ENCODE measurements at regions of chr12 and their contacts with region 1.

Region 1: DNA sequence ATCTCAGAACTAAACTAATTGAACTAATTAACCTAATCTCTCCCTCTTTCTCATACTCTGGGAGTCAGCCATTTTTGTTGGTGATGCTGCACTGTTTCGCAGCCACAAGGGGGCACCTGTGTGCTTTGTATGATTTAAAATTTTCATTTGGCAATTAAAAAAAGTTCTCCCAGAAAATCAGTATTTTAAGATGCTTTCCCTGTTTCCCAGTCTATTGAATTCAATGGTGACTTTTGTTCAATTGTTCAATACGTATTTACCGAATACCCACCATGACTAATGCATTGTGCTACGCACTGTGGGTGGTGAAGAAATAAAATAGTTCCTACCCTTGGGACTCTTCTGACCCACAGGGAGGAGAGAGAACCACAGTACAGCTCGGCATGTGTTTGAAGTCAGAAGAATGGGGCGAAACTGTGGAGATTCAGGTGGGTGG is 63.7 kb downstream of the ZNF664 start:
- DNase-seq: peak in 7 of 9 donors; percentile 14 to 57 (median 37)
- ATAC-seq: peak; percentile 72
- H3K4me3 ChIP-seq: no peak overlapping the region
- H3K4me3 Mint-ChIP-seq: no peak overlapping the region
- H3K27ac ChIP-seq: no peak overlapping the region
- H3K27ac Mint-ChIP-seq: no peak overlapping the region
- H3K4me1 ChIP-seq: no peaks in the 10 kb centered on the region
- H3K4me1 Mint-ChIP-seq: no peaks in the 10 kb centered on the region
- H3K27me3 ChIP-seq: no peaks in the 10 kb centered on the region
- H3K27me3 Mint-ChIP-seq: peaks cover 8 to 10% (median 9%) of the 10 kb centered on the region in 5 donors

Region 2: DNA sequence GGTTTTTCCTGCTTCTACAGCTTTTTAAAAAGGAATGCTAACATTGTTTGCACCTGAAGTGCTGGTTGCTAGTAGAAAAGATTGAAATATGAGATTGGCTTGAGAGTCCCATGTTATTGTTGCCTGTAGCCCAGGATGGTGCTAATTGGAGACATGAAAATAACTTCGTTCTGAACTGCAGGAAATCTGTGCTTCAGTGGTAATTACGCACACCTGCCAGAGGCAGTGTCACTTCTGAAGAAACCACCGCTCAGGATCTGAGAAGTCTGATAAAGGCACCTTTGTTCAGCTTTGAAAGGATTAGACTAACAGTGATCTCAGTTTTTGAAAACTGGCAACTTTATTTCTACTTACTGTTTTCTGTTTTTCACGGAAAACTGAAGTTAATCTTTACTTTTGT is 340.0 kb before region 1 on chr12:
- CTCF ChIA-PET with region 1: no interaction called
- POLR2A ChIA-PET with region 1: no interaction called
- intact Hi-C with region 1: no loop called
- DNase-seq: peak in 1 of 9 donors; percentile 22
- ATAC-seq: no peak
- H3K4me3 ChIP-seq: no peak overlapping the region
- H3K4me3 Mint-ChIP-seq: no peak overlapping the region
- H3K27ac ChIP-seq: no peak overlapping the region
- H3K27ac Mint-ChIP-seq: no peak overlapping the region
- H3K4me1 ChIP-seq: no peaks in the 10 kb centered on the region
- H3K4me1 Mint-ChIP-seq: peaks cover 0 to 5% (median 0%) of the 10 kb centered on the region in 7 donors
- H3K27me3 ChIP-seq: no peaks in the 10 kb centered on the region
- H3K27me3 Mint-ChIP-seq: no peaks in the 10 kb centered on the region

Region 3: DNA sequence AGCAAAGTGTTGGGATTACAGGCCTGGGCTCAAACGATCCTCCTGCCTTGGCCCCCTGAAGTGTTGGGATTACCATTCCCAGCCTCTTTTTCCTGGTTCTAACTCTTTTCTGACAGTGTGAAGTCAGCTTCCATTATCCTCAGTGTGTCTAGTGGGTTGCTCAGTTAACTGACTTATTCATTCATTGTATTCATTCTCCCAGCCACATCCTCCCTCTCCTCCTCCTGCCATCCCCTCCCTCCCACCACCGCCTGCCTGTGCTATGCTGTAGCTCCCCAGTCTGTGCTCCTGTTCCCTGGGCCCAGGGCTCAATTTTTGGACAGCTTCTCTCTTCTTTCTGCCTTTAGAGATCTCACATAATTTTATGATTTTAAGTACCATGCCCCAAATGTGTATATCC is 305.1 kb before region 1 on chr12:
- CTCF ChIA-PET with region 1: no interaction called
- POLR2A ChIA-PET with region 1: no interaction called
- intact Hi-C with region 1: no loop called
- DNase-seq: no peak
- ATAC-seq: no peak
- H3K4me3 ChIP-seq: no peak overlapping the region
- H3K4me3 Mint-ChIP-seq: no peak overlapping the region
- H3K27ac ChIP-seq: no peak overlapping the region
- H3K27ac Mint-ChIP-seq: peak overlapping the region in 1 of 9 donors; percentile 21
- H3K4me1 ChIP-seq: no peaks in the 10 kb centered on the region
- H3K4me1 Mint-ChIP-seq: peaks cover 0 to 7% (median 0%) of the 10 kb centered on the region in 7 donors
- H3K27me3 ChIP-seq: no peaks in the 10 kb centered on the region
- H3K27me3 Mint-ChIP-seq: no peaks in the 10 kb centered on the region

Region 4: GRCh38 chr12:123905319-123905925 is 131.3 kb before region 1 on chr12:
- CTCF ChIA-PET with region 1: interaction called, 4 read pairs
- POLR2A ChIA-PET with region 1: no interaction called
- intact Hi-C with region 1: loop called (anchors 1 kb)
- DNase-seq: peak; percentile 38 to 78 (median 66)
- ATAC-seq: peak; percentile 76
- H3K4me3 ChIP-seq: no peak overlapping the region
- H3K4me3 Mint-ChIP-seq: no peak overlapping the region
- H3K27ac ChIP-seq: no peak overlapping the region
- H3K27ac Mint-ChIP-seq: peak overlapping the region in 1 of 9 donors; percentile 42
- H3K4me1 ChIP-seq: no peaks in the 10 kb centered on the region
- H3K4me1 Mint-ChIP-seq: peaks cover 7 to 17% (median 15%) of the 10 kb centered on the region in 7 donors
- H3K27me3 ChIP-seq: no peaks in the 10 kb centered on the region
- H3K27me3 Mint-ChIP-seq: peaks cover 0 to 17% (median 3%) of the 10 kb centered on the region in 5 donors

Region 5: DNA sequence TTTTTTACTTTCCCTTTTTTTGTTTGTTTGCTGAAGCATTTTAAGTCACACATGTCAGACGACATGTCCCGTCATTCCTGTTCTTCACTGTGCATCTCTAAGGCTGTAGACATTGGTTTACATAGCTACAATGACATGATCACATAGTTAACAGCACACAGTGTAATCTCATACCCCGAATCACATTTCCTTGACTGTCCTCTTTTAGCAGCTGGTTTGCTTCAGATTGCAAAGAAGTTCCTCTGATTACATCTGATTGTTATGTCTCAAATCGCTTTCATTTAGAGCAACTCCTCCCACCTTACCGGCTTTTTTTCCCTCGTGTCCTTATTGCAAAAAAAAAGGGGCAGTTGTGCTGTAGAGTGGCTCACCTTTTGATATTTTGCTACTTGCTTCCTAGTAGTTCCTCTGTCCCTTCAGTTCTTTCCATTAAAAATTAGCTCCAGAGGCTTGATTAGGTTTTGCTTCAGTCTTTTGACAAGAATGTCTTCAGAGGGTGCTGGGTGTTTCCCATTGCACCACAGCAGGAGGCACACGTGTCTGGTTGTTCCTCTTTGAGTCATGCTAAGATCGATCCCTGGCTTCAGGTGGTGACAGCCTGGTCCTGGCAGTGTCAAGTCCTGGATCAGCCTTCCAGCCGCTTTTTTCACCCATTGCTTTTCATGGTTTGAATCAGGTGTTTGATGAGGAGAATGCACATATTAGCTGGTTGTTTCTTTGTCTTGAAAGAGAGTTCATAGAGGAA is 28.7 kb before region 1 on chr12:
- CTCF ChIA-PET with region 1: interaction called, 3 read pairs
- POLR2A ChIA-PET with region 1: no interaction called
- intact Hi-C with region 1: loop called in 1 of 2 experiments (anchors 1 kb)
- DNase-seq: peak in 1 of 9 donors; percentile 6
- ATAC-seq: peak; percentile 39
- H3K4me3 ChIP-seq: no peak overlapping the region
- H3K4me3 Mint-ChIP-seq: peak overlapping the region; percentile 19 to 79 (median 59)
- H3K27ac ChIP-seq: no peak overlapping the region
- H3K27ac Mint-ChIP-seq: peak overlapping the region; percentile 8 to 67 (median 53)
- H3K4me1 ChIP-seq: peaks cover 0 to 30% of the 10 kb centered on the region in 2 donors
- H3K4me1 Mint-ChIP-seq: peaks cover 36 to 46% (median 38%) of the 10 kb centered on the region in 7 donors
- H3K27me3 ChIP-seq: no peaks in the 10 kb centered on the region
- H3K27me3 Mint-ChIP-seq: no peaks in the 10 kb centered on the region

Region 6: DNA sequence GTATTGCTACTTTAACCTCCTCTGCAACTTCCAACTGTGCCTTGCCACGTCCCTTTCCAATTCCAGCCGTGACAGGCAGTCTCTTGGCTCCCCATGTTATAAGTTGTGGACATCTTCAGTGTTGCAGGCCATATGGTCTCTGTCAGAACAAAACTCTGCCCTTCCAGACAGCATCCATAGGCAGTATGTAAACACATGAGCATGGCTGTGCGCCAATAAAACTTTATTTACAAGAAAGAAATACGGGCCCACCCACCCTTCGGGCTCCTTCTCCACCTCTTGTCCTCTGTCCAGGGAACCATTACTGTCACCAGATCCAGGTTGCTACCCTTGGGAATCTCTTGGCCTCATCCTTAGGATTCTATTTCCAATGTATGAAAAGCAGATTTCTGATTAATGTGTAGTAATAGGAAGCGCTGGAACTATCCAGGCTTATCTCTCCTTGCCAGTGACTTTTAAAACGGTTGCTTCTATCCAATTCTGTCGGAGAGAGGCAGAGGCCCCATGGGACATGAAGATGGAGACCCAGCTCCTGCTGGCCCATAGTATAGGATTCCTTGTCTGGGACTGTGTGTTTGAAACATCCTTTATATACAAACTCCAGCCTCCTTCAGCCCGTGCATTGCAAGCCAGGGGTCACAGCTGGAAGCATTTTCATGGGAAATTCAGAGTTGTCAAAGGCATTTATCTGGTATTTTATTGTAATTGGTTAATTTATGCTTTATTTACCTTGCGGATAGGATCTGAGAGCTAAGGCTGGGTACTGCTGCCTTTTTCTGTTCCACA is 50.8 kb after region 1 on chr12:
- CTCF ChIA-PET with region 1: no interaction called
- POLR2A ChIA-PET with region 1: no interaction called
- intact Hi-C with region 1: no loop called
- DNase-seq: no peak
- ATAC-seq: no peak
- H3K4me3 ChIP-seq: no peak overlapping the region
- H3K4me3 Mint-ChIP-seq: no peak overlapping the region
- H3K27ac ChIP-seq: no peak overlapping the region
- H3K27ac Mint-ChIP-seq: no peak overlapping the region
- H3K4me1 ChIP-seq: no peaks in the 10 kb centered on the region
- H3K4me1 Mint-ChIP-seq: peaks cover 0 to 1% (median 0%) of the 10 kb centered on the region in 7 donors
- H3K27me3 ChIP-seq: no peaks in the 10 kb centered on the region
- H3K27me3 Mint-ChIP-seq: peaks cover 0 to 4% (median 0%) of the 10 kb centered on the region in 5 donors

Region 7: DNA sequence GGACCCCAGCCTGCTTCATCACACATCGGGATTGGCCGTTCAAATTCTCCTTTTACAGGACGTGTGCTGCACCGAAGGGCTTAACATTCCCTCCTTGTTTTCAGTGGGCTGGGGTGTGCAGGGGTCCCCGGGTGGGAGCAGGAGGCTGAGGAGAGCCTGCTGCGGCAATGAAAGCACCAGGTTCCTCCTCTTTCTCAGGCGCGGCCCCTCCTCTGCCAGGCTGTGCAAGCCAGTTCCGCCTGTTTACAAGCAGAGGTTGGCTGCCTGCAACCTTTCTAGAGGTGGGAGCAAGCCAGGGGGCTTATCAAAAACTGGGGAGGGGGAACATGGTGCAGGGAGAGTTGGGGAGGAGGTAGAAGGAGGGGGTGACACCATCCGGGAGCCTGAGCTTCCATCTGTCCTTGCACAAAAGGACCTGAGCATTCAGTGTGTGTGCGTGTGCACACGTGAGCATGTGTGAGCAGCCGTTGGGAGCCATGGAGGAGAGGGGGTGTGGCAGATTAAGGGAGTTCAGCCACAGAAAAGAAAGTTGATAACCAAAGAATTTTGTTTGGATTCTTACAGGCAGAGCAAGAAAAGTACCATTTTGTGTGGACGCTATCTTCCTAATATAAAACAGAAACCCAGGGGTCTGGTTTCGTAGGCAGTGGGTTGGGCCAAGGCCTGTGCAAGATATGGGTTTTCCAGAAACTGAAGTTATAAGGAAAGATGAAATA is 149.4 kb after region 1 on chr12:
- CTCF ChIA-PET with region 1: no interaction called
- POLR2A ChIA-PET with region 1: no interaction called
- intact Hi-C with region 1: no loop called
- DNase-seq: no peak
- ATAC-seq: no peak
- H3K4me3 ChIP-seq: no peak overlapping the region
- H3K4me3 Mint-ChIP-seq: no peak overlapping the region
- H3K27ac ChIP-seq: no peak overlapping the region
- H3K27ac Mint-ChIP-seq: no peak overlapping the region
- H3K4me1 ChIP-seq: no peaks in the 10 kb centered on the region
- H3K4me1 Mint-ChIP-seq: peaks cover 0 to 10% (median 0%) of the 10 kb centered on the region in 7 donors
- H3K27me3 ChIP-seq: no peaks in the 10 kb centered on the region
- H3K27me3 Mint-ChIP-seq: peaks cover 0 to 3% (median 0%) of the 10 kb centered on the region in 5 donors

Region 8: DNA sequence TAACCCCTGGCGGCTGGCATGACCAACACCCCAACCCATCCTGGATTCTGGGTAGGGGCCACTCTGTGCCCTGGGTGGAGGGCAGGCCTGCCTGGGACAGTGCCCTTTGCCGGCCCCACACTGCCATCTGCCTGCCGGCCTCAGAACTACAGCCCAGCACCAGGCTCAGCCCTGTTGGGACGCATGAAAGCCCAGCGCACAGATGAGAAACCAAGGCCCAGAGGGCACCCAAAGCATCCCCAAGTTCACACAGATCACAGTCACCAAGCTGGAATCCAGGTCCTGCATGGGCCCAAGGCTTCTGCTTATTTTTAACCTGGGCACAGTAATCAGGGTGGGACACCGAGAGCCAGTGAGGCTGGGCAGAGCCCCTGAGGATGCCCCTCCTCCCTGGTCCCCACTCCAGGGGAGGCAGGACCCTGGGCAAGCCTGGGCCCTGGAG is 284.4 kb after region 1 on chr12:
- CTCF ChIA-PET with region 1: no interaction called
- POLR2A ChIA-PET with region 1: no interaction called
- intact Hi-C with region 1: loop called (anchors 1 kb)
- DNase-seq: peak; percentile 11 to 78 (median 39)
- ATAC-seq: peak; percentile 82
- H3K4me3 ChIP-seq: no peak overlapping the region
- H3K4me3 Mint-ChIP-seq: no peak overlapping the region
- H3K27ac ChIP-seq: no peak overlapping the region
- H3K27ac Mint-ChIP-seq: no peak overlapping the region
- H3K4me1 ChIP-seq: no peaks in the 10 kb centered on the region
- H3K4me1 Mint-ChIP-seq: peaks cover 0 to 2% (median 0%) of the 10 kb centered on the region in 7 donors
- H3K27me3 ChIP-seq: no peaks in the 10 kb centered on the region
- H3K27me3 Mint-ChIP-seq: no peaks in the 10 kb centered on the region

Region 9: GRCh38 chr12:124466216-124467128 is 429.8 kb after region 1 on chr12:
- CTCF ChIA-PET with region 1: no interaction called
- POLR2A ChIA-PET with region 1: no interaction called
- intact Hi-C with region 1: loop called in 1 of 2 experiments (anchors 5 kb)
- DNase-seq: peak; percentile 76 to 91 (median 83)
- ATAC-seq: peak; percentile 98
- H3K4me3 ChIP-seq: peak overlapping the region; percentile 63
- H3K4me3 Mint-ChIP-seq: peak overlapping the region; percentile 48 to 85 (median 74)
- H3K27ac ChIP-seq: peak overlapping the region; percentile 58
- H3K27ac Mint-ChIP-seq: peak overlapping the region; percentile 73 to 93 (median 82)
- H3K4me1 ChIP-seq: peaks cover 18 to 27% of the 10 kb centered on the region in 2 donors
- H3K4me1 Mint-ChIP-seq: peaks cover 0 to 46% (median 37%) of the 10 kb centered on the region in 7 donors
- H3K27me3 ChIP-seq: no peaks in the 10 kb centered on the region
- H3K27me3 Mint-ChIP-seq: no peaks in the 10 kb centered on the region

Region 10: DNA sequence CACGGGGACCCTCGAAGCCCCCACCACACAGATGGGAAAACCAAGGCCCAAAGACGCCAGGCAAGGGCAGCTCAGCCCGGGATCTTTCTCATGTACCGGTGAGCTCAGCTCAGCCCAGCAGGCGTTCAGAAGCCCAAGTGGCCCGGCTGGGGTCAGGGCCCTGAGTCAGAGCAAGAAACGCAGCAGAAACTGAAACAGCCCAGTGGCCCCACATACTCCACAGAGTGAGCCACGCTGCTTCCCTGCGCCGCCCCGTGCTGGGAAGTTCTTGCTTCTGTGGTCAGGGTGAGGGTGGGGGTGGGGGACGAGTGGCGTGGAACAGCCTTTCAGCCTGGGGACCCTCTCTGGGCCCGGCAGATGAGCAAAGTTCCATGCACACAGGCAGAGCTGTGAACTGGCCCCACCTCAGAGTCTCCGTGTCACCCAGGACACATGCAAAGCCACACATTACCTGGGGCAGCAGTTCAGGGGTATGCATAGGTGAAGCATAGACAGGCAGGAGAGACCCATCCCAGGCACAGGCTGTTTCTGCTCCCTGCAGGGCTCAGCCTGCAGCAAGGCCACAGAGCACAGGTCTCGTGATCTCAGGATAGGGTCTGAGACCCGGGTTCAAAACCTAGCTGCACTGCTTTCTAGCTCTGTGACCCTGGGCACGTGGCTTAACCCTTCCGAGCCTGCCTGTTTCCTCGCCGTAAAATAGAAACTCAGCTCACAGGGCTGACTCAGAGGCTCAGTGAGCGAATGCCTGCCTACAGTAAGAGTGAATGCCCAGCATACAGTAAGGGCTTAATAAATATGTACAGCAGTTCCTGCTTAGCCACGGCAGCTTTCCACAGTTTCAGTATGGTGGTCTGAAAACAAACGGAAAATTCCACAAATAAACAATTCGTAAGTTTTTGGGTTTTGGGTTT is 509.1 kb after region 1 on chr12:
- CTCF ChIA-PET with region 1: interaction called, 4 read pairs
- POLR2A ChIA-PET with region 1: no interaction called
- intact Hi-C with region 1: loop called in 1 of 2 experiments (anchors 5 kb)
- DNase-seq: peak in 1 of 9 donors; percentile 57
- ATAC-seq: peak; percentile 78
- H3K4me3 ChIP-seq: peak overlapping the region; percentile 11
- H3K4me3 Mint-ChIP-seq: peak overlapping the region in 6 of 10 donors; percentile 6 to 57 (median 43)
- H3K27ac ChIP-seq: no peak overlapping the region
- H3K27ac Mint-ChIP-seq: peak overlapping the region in 2 of 9 donors; percentile 22 to 29
- H3K4me1 ChIP-seq: peaks cover 21 to 44% of the 10 kb centered on the region in 2 donors
- H3K4me1 Mint-ChIP-seq: peaks cover 30 to 80% (median 50%) of the 10 kb centered on the region in 7 donors
- H3K27me3 ChIP-seq: no peaks in the 10 kb centered on the region
- H3K27me3 Mint-ChIP-seq: no peaks in the 10 kb centered on the region

Region 11: DNA sequence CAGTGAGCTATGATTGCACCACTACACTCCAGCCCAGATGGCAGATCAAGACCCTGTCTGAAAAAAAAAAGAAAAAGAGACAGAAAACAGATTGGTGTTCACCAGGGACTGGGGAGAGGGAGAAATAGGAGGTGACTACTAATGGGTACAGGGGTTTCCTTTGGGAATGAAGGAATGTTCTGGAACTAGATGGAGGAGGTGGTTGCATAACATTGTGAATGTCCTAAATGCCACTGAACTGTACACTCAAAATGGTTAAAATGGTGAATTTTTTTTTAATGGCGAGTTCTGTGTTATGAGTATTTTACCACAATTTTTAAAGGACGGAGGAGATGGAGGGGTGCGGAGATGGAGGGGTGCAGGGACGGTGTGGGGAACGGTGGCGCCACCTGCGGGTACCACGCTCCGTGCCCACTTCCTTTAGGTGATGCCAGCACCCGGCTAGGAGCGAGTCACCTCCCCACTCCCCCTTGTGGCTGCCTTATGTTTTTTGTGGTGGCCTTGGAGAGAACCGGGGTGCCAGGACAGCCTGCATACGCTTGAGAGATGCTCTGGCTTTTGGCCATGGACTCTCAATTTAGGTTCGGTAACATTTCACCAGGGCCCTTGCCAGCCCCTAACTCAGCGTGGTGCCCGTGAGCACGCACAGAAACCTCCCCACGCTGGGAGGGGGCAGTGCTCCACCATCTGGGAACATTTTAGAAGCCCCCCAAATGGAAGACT is 861.7 kb after region 1 on chr12:
- CTCF ChIA-PET with region 1: no interaction called
- POLR2A ChIA-PET with region 1: no interaction called
- intact Hi-C with region 1: loop called (anchors 1 to 2 kb)
- DNase-seq: peak in 8 of 9 donors; percentile 53 to 81 (median 72)
- ATAC-seq: peak; percentile 98
- H3K4me3 ChIP-seq: no peak overlapping the region
- H3K4me3 Mint-ChIP-seq: peak overlapping the region in 8 of 10 donors; percentile 23 to 70 (median 48)
- H3K27ac ChIP-seq: no peak overlapping the region
- H3K27ac Mint-ChIP-seq: peak overlapping the region in 3 of 9 donors; percentile 36 to 68 (median 38)
- H3K4me1 ChIP-seq: no peaks in the 10 kb centered on the region
- H3K4me1 Mint-ChIP-seq: peaks cover 6 to 20% (median 13%) of the 10 kb centered on the region in 7 donors
- H3K27me3 ChIP-seq: no peaks in the 10 kb centered on the region
- H3K27me3 Mint-ChIP-seq: peaks cover 0 to 2% (median 0%) of the 10 kb centered on the region in 5 donors